Mammary epithelial cell (primary cell): ENCODE measurements at regions of chr19 and their contacts with region 1.

Region 1: GRCh38 chr19:3275583-3276340 is 51.3 kb downstream of the CELF5 start:
- DNase-seq: peak; percentile 83
- H3K4me3 ChIP-seq: peak overlapping the region; percentile 35 to 60 (median 52)
- H3K27ac ChIP-seq: no peak overlapping the region
- H3K4me1 ChIP-seq: peaks cover 9% of the 10 kb centered on the region
- H3K27me3 ChIP-seq: no peaks in the 10 kb centered on the region
- CTCF ChIP-seq: no peak

Region 2: DNA sequence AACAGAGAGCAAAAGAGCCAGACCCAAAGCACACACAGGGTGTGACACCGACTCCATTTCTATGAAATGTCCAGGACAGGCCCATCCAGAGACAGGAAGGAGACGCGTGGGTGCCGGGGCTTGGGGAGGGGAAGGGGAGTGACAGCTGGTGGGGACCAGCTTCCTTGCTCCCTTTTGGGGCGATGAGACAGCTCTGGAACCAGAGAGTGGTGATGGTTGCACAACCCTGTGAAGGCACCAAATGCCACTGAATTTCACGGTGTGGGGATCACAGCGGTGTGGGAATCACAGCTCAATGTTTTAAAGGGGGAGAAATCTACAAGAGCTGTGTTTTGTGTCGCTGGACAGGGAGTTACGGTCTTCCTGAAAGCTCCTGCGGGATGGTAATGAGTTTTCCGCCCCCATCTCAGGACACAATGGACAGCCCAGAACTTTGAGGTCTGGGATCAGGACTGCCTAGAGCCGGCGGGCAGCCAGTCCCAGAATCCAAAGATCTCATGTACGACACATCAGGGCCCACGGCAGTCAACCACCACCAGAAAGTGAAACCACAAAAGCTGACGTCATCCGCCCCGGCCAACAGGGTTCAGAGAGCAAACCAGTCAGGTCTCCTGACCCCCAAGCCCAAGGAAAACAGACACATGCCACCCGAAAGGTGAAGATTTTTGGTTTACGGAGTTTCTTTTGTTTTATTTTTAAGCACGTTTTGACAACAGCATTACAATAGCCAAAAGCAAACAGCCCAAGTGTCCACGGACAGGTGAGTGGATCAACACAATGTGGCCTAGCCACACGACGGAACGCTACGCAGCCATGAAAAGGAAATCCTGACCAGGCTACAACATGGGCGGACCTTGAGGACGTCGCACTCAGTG is 500.0 kb before region 1 on chr19:
- CTCF ChIA-PET with region 1: interaction called, 26 read pairs
- dilution Hi-C with region 1: no loop called
- in situ Hi-C with region 1: no loop called
- intact Hi-C with region 1: no loop called
- DNase-seq: peak; percentile 54
- H3K4me3 ChIP-seq: no peak overlapping the region
- H3K27ac ChIP-seq: no peak overlapping the region
- H3K4me1 ChIP-seq: no peaks in the 10 kb centered on the region
- H3K27me3 ChIP-seq: no peaks in the 10 kb centered on the region
- CTCF ChIP-seq: no peak

Region 3: GRCh38 chr19:3029065-3029923 is 246.5 kb before region 1 on chr19 and contains the start of gene TLE2:
- CTCF ChIA-PET with region 1: no interaction called
- dilution Hi-C with region 1: loop called (anchors 5 kb)
- in situ Hi-C with region 1: no loop called
- intact Hi-C with region 1: no loop called
- DNase-seq: no peak
- H3K4me3 ChIP-seq: peak within 1 kb of the TSS; percentile 38 to 49 (median 41)
- H3K27ac ChIP-seq: no peak within 1 kb of the TSS
- H3K4me1 ChIP-seq: peaks cover 1% of the 10 kb centered on the region
- H3K27me3 ChIP-seq: peaks cover 4% of the 10 kb centered on the region
- CTCF ChIP-seq: no peak
- total RNA-seq, gene TLE2: 4.8 to 7.2 TPM

Region 4: DNA sequence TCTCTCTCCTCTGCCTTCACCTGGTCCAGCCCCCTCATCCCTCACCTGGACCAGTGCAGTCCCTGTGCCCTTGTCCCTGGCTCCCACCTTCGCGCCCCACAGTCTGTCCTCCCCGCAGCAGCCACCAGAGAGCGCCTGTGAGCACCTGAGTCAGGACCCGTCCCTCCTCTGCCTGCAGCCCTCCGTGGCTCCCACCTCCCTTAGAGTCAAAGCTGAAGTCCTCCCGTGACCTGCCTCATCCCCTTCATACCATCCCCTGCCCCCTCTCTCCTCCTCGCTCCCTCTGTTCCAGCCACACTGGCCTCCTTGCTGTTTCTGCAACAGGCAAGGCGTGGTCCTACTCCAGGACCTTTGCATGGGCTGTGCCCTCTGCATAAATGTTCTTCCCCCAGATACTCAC is 41.0 kb before region 1 on chr19:
- CTCF ChIA-PET with region 1: no interaction called
- dilution Hi-C with region 1: loop called (anchors 5 kb)
- in situ Hi-C with region 1: no loop called
- intact Hi-C with region 1: no loop called
- DNase-seq: no peak
- H3K4me3 ChIP-seq: no peak overlapping the region
- H3K27ac ChIP-seq: no peak overlapping the region
- H3K4me1 ChIP-seq: no peaks in the 10 kb centered on the region
- H3K27me3 ChIP-seq: no peaks in the 10 kb centered on the region
- CTCF ChIP-seq: peak; percentile 28 to 36